Posterior vena cava (tissue), 2 donors: ENCODE measurements at regions of chr6 and their contacts with region 1.

Region 1: GRCh38 chr6:99689916-99690685 is 83.5 kb downstream of the PRDM13 start:
- DNase-seq: no peak

Region 2: DNA sequence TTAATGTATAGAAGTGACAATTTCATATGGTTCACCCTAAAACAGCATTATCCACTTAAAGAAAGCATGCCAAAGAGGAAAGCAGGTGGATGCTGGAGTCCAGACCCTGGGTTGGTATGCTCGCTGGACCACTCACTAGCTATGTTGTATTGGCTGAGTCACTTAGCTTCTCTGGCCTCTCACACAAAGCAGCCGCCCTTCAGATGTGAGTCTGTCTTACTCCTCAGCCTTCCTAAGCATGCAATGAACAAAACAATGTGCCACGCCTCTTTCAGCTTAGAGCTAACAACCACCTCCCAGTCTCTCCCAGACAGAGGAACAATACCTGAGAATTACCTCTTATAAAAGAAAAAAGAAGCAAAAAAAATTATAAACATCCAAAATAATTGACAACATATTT is 745.2 kb after region 1 on chr6:
- intact Hi-C with region 1: loop called in 1 of 2 experiments (anchors 10 kb)
- DNase-seq: no peak